ENCODE measurements at regions of chr7 and their contacts with region 1.

Region 1: GRCh38 chr7:37247861-37248260 is 200.8 kb downstream of the ELMO1 start:
- DNase-seq: no peak
- H3K4me3 ChIP-seq: no peak overlapping the region
- H3K27ac ChIP-seq: no peak overlapping the region
- H3K4me1 ChIP-seq: no peaks in the 10 kb centered on the region
- CTCF ChIP-seq: no peak

Region 2: GRCh38 chr7:36638140-36638539 is 609.7 kb before region 1 on chr7:
- CTCF ChIA-PET with region 1: no interaction called
- POLR2A ChIA-PET with region 1: interaction called, 10 read pairs
- intact Hi-C with region 1: no loop called
- DNase-seq: no peak
- H3K4me3 ChIP-seq: no peak overlapping the region
- H3K27ac ChIP-seq: no peak overlapping the region
- H3K4me1 ChIP-seq: no peaks in the 10 kb centered on the region
- CTCF ChIP-seq: no peak

Region 3: DNA sequence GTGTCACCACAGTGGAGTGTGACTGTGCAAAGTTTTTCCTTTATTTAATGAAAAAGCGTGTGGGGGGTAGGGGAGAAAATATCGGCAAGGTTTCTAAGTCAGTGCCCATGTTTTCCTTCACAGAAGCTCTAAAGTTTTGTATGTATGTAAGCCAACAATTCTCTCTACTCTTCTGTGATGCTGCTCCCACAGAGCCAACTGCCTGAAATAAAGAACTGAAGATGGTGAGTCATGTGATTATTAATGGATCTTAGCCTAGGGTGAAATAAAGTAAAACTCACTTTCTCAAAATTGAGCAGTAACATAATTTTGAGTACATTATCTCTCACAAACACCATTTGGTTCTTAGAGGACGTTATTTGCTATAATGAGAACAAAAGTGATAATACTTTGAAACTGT is 57.1 kb after region 1 on chr7:
- CTCF ChIA-PET with region 1: no interaction called
- POLR2A ChIA-PET with region 1: no interaction called
- intact Hi-C with region 1: no loop called
- DNase-seq: no peak
- H3K4me3 ChIP-seq: no peak overlapping the region
- H3K27ac ChIP-seq: no peak overlapping the region
- H3K4me1 ChIP-seq: no peaks in the 10 kb centered on the region
- CTCF ChIP-seq: no peak

Measured in OCI-LY7 (cell line).